Heart left ventricle (tissue), 16 donors: ENCODE measurements at regions of chr7 and their contacts with region 1.

Region 1: DNA sequence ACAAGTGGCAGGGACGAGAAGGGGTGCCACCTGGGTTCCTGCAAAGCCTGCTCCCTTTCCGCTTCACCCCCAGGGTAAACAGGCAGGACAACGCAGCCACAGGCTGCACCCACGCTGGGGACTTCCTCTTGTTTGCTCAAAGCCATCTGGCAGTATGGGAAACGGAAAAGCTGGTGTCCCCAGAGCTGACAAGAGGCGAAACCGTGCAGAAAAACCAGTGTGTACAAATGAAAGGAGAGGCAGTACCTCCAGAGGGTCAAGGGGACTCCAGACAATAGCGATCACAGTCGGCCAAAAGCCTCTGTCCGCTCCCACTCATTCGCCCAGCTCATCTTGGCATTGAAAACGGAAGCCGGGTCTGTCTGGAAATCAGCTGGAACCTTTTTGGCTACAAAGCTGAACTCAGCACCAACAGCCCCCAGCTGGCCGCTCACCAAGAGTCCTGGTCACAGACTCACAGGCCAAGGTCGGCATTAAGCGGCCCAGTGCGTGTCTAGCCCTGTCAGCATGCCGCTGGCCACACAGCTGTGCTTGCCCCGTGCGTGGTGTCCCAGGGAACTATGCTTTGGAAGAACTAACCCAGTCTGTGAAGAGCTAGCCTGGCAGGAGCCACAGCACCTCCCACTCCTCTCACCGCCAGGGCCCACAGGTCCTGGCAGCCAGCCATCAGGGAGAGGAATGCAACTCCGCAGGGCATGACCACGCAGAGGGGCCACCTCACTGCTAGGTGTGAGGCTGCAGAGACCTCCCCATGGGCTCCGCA is 10.4 kb downstream of the TNS3 start:
- DNase-seq: peak; percentile 80 to 93 (median 90)
- ATAC-seq: peak; percentile 49 to 83 (median 76)
- H3K4me3 ChIP-seq: peak overlapping the region in 9 of 12 donors; percentile 2 to 29 (median 16)
- H3K27ac ChIP-seq: peak overlapping the region; percentile 51 to 93 (median 82)
- H3K4me1 ChIP-seq: peaks cover 0 to 85% (median 42%) of the 10 kb centered on the region in 12 donors
- H3K27me3 ChIP-seq: no peaks in the 10 kb centered on the region
- CTCF ChIP-seq: no peak
- POLR2A ChIP-seq: no peak

Region 2: GRCh38 chr7:47132471-47132870 is 439.0 kb before region 1 on chr7:
- intact Hi-C with region 1: no loop called
- DNase-seq: no peak
- ATAC-seq: no peak
- H3K4me3 ChIP-seq: no peak overlapping the region
- H3K27ac ChIP-seq: no peak overlapping the region
- H3K4me1 ChIP-seq: peaks cover 0 to 6% (median 0%) of the 10 kb centered on the region in 12 donors
- H3K27me3 ChIP-seq: no peaks in the 10 kb centered on the region
- CTCF ChIP-seq: no peak
- POLR2A ChIP-seq: no peak

Region 3: GRCh38 chr7:47285860-47286522 is 285.5 kb before region 1 on chr7:
- intact Hi-C with region 1: loop called in 1 of 10 experiments (anchors 10 kb)
- DNase-seq: no peak
- ATAC-seq: peak; percentile 27 to 72 (median 52)
- H3K4me3 ChIP-seq: no peak overlapping the region
- H3K27ac ChIP-seq: peak overlapping the region in 10 of 12 donors; percentile 6 to 57 (median 46)
- H3K4me1 ChIP-seq: peaks cover 0 to 26% (median 11%) of the 10 kb centered on the region in 12 donors
- H3K27me3 ChIP-seq: no peaks in the 10 kb centered on the region
- CTCF ChIP-seq: peak in 5 of 12 donors; percentile 15 to 39 (median 25)
- POLR2A ChIP-seq: no peak

Region 4: DNA sequence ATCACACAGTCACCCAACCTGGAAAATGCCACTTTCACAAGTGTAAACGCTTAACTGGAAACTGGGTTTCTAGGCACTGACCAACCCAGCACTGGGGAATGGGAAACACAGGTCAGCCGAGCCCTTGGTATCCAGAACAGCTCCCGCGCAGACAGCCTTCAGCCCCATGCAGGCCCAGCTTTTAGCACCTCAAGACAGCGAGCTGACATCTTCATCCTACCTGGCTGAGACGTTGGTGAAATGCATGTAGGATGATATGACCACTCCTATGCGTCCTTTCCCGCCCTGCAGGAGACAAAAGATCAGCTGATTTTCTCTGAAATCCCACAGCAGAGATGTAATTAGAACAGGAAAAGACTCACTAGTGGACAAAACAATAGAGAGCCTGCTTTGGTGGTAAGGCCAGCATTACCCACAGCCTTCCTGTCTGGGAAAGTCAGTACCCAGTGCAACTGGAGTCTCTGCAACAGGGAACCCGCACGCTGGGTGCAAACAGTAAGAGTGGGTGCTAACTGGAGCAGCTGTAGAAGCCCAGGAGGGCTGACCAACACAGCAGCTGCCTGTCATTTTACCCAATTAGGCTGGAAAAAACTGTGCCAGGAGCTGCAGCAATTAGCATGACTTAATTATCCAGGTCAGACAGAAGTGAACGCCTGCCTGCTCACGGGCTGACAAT is 143.3 kb before region 1 on chr7:
- intact Hi-C with region 1: no loop called
- DNase-seq: no peak
- ATAC-seq: peak in 2 of 4 donors; percentile 13 to 29
- H3K4me3 ChIP-seq: no peak overlapping the region
- H3K27ac ChIP-seq: no peak overlapping the region
- H3K4me1 ChIP-seq: peaks cover 0 to 16% (median 2%) of the 10 kb centered on the region in 12 donors
- H3K27me3 ChIP-seq: no peaks in the 10 kb centered on the region
- CTCF ChIP-seq: no peak
- POLR2A ChIP-seq: no peak

Region 5: GRCh38 chr7:47444379-47445057 is 127.0 kb before region 1 on chr7:
- intact Hi-C with region 1: loop called in 2 of 10 experiments (anchors 5 kb)
- DNase-seq: no peak
- ATAC-seq: peak in 1 of 4 donors; percentile 32
- H3K4me3 ChIP-seq: no peak overlapping the region
- H3K27ac ChIP-seq: peak overlapping the region in 1 of 12 donors; percentile 50
- H3K4me1 ChIP-seq: peaks cover 0 to 44% (median 22%) of the 10 kb centered on the region in 12 donors
- H3K27me3 ChIP-seq: no peaks in the 10 kb centered on the region
- CTCF ChIP-seq: peak; percentile 23 to 63 (median 48)
- POLR2A ChIP-seq: no peak

Region 6: DNA sequence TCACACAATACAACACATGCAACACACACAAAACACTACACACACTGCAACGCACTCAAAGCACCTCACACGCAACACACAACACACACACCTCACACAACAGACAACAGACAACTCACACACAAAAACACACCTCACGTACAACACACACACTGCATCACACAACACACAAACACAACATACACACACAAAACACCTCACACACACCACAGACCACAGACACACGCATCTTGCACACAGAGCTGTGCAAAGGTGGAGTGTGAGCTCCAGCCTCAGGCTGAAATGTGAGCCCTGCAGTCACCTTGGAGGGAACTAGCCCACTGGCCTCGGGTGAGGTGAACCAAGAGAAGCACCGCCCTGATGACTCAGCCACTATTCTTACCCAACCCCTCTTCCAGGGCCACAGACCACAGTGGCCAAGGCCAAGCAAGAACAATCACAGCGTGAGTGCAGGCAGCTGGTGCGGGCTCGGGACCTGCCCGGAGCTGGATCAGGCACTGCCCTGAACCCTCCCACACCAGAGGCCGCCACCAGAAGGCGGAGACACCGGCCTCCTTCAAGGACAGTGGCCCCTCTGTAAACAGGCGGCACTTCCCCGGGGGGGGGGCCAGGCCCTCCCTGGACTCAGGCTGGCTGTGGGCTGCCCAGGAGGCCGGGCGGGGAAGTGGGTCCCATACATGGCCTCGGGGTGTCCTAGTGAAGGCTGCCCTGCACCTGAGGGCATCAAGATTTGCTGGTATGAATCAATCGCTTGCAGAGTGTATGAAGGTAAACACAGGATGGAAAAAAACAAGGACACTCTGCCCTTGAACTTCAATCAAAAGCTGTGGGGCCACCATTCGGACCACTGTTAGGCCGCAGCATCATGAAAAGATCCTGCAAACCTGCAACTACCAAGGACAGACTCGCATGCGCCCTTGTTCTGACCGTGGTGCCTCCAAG is 96.3 kb before region 1 on chr7:
- intact Hi-C with region 1: loop called in 2 of 10 experiments (anchors 5 to 10 kb)
- DNase-seq: peak; percentile 86 to 95 (median 90)
- ATAC-seq: peak; percentile 94 to 96 (median 95)
- H3K4me3 ChIP-seq: peak overlapping the region in 1 of 12 donors; percentile 1
- H3K27ac ChIP-seq: peak overlapping the region; percentile 66 to 94 (median 86)
- H3K4me1 ChIP-seq: peaks cover 0 to 50% (median 34%) of the 10 kb centered on the region in 12 donors
- H3K27me3 ChIP-seq: no peaks in the 10 kb centered on the region
- CTCF ChIP-seq: peak in 8 of 12 donors; percentile 21 to 54 (median 34)
- POLR2A ChIP-seq: no peak

Region 7: GRCh38 chr7:47501406-47501805 is 70.1 kb before region 1 on chr7:
- intact Hi-C with region 1: loop called in 1 of 10 experiments (anchors 5 kb)
- DNase-seq: peak in 1 of 5 donors; percentile 66
- ATAC-seq: peak in 3 of 4 donors; percentile 11 to 71 (median 35)
- H3K4me3 ChIP-seq: no peak overlapping the region
- H3K27ac ChIP-seq: peak overlapping the region in 2 of 12 donors; percentile 9 to 89
- H3K4me1 ChIP-seq: peaks cover 0 to 84% (median 27%) of the 10 kb centered on the region in 12 donors
- H3K27me3 ChIP-seq: no peaks in the 10 kb centered on the region
- CTCF ChIP-seq: no peak
- POLR2A ChIP-seq: no peak

Region 8: GRCh38 chr7:47818796-47819606 is 247.5 kb after region 1 on chr7:
- intact Hi-C with region 1: loop called in 1 of 10 experiments (anchors 5 kb)
- DNase-seq: peak in 4 of 5 donors; percentile 59 to 74 (median 68)
- ATAC-seq: peak in 3 of 4 donors; percentile 61 to 78 (median 63)
- H3K4me3 ChIP-seq: no peak overlapping the region
- H3K27ac ChIP-seq: no peak overlapping the region
- H3K4me1 ChIP-seq: peaks cover 0 to 21% (median 8%) of the 10 kb centered on the region in 12 donors
- H3K27me3 ChIP-seq: no peaks in the 10 kb centered on the region
- CTCF ChIP-seq: peak; percentile 84 to 100 (median 92)
- POLR2A ChIP-seq: no peak